ENCODE measurements at regions of chr14 and their contacts with region 1.

Region 1: DNA sequence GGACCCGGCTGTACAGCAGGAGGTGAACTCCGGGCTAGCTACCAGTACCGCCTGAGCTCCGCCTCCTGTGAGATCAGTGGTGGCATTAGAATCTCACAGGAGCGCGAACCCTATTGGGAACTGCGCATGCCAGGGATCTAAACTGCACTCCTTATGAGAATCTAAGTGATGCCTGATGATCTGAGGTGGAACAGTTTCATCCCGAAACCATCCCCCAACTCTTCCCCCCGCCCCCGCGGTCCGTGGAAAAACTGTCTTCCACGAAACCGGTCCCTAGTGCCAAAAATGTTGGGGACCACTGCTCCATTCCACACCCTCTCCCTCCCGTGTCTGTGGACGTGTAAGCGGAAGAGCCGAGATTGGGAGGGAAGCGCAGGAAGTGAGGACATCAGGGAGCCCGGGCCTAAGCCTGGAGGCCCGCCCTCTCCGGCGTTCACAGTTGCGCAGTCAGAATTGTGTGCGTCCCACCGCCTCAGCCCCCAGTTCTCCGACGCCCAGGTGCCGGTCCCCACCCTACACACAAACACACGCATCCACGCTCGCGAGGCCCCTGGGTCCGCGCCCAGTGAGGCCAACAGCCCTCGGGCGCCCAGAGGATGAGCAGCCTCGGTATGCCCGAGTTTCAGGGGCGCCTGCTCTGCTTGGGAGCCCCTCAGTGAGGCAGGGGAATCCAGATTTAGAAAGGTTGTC is 1.8 kb upstream of the RNASE4 start:
- DNase-seq: peak; percentile 93 to 94
- H3K4me3 ChIP-seq: peak overlapping the region; percentile 34 to 57 (median 56)
- H3K27ac ChIP-seq: peak overlapping the region; percentile 98 to 100 (median 100)
- H3K4me1 ChIP-seq: peaks cover 7 to 10% of the 10 kb centered on the region in 2 donors
- H3K27me3 ChIP-seq: no peaks in the 10 kb centered on the region
- CTCF ChIP-seq: peak in 1 of 6 experiments; percentile 23
- POLR2A ChIP-seq: peak; percentile 76 to 97

Region 2: GRCh38 chr14:20332788-20333493 is 349.6 kb before region 1 on chr14 and contains the start of gene CCNB1IP1:
- intact Hi-C with region 1: loop called (anchors 5 kb)
- DNase-seq: peak; percentile 64 to 67
- H3K4me3 ChIP-seq: peak within 1 kb of the TSS in 2 of 3 donors; percentile 37 to 49
- H3K27ac ChIP-seq: peak within 1 kb of the TSS; percentile 66 to 79 (median 77)
- H3K4me1 ChIP-seq: peaks cover 13 to 16% of the 10 kb centered on the region in 2 donors
- H3K27me3 ChIP-seq: no peaks in the 10 kb centered on the region
- CTCF ChIP-seq: no peak
- POLR2A ChIP-seq: peak in 1 of 2 donors; percentile 84
- total RNA-seq, gene CCNB1IP1: 57.2 to 150 (median 92.9) TPM

Region 3: DNA sequence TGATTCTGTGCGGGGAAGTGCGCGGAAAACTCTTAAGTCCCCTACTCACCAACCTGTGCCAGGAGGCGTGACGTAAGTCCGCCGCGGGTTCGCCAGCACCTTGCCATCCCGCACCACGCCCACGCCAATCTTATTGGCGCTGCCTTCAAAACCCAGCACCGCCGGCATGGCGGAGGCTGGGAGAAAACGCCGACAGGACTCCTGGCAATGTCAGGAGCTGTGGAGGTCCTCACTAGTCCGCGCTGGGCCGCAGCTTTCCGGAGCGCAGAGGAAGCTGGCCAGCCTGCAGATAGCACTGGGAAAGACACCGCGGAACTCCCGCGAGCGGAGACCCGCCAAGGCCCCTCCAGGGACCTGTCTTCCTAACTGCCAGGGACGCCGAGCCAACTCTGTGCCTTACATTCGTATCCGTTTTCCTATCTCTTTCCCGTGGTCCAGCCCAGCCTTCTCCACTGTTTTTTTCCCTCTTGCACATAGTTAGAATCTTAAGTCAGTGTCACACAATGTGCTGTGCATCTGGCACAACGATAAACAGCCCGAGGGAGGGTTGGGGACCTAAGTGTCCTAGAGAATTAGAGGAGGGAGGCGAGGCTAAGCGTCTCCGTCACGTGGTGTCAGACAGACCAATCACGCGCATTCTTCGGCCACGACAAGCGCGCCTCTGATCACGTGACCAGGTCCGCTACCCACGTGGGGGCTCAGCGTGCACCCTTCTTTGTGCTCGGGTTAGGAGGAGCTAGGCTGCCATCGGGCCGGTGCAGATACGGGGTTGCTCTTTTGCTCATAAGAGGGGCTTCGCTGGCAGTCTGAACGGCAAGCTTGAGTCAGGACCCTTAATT is 227.8 kb before region 1 on chr14 and contains the starts of genes APEX1 and OSGEP:
- intact Hi-C with region 1: loop called (anchors 10 kb)
- DNase-seq: peak; percentile 99
- H3K4me3 ChIP-seq: peak within 1 kb of the TSS; percentile 54 to 70 (median 59)
- H3K27ac ChIP-seq: peak within 1 kb of the TSS; percentile 81 to 94 (median 85)
- H3K4me1 ChIP-seq: peaks cover 17 to 23% of the 10 kb centered on the region in 2 donors
- H3K27me3 ChIP-seq: no peaks in the 10 kb centered on the region
- CTCF ChIP-seq: peak in 1 of 6 experiments; percentile 18
- POLR2A ChIP-seq: peak in 1 of 2 donors; percentile 84
- total RNA-seq, gene APEX1: 133 to 179 (median 142) TPM
- total RNA-seq, gene OSGEP: 56.7 to 88.8 (median 75.0) TPM

Region 4: GRCh38 chr14:20613094-20614037 is 69.2 kb before region 1 on chr14:
- intact Hi-C with region 1: loop called (anchors 5 kb)
- DNase-seq: peak; percentile 80 to 87
- H3K4me3 ChIP-seq: peak overlapping the region; percentile 9 to 29 (median 11)
- H3K27ac ChIP-seq: peak overlapping the region; percentile 30 to 79 (median 61)
- H3K4me1 ChIP-seq: no peaks in the 10 kb centered on the region
- H3K27me3 ChIP-seq: no peaks in the 10 kb centered on the region
- CTCF ChIP-seq: peak in 5 of 6 experiments; percentile 53 to 99 (median 90)
- POLR2A ChIP-seq: no peak

Region 5: DNA sequence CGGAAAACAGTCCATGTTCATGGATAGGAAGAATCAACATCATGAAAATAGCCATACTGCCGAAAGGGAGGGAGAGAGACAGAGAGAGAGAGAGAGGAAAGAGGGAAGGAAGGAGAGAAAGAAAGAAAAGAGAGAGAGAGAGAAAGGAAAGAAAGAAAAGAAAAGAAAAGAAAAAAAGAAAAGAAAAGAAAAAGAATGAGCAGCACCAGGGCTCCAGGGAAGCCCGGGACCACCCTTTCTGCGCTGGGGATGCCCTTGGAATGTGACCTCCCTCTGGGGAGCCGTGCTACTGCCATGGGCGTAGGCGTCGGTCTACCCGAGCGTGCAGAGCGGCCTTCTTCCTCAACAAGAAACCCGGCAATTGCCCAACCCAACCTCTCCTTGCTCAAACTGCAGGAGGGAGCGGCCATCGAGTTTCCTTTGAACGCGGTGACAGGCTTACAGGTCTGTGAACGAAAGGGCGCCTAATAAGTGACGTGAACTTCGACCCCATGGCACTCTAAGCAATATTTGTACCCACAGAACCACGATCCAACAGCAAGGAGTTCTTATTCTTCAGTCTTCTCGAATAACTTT is 58.0 kb before region 1 on chr14:
- intact Hi-C with region 1: loop called (anchors 5 kb)
- DNase-seq: peak; percentile 71 to 76
- H3K4me3 ChIP-seq: no peak overlapping the region
- H3K27ac ChIP-seq: no peak overlapping the region
- H3K4me1 ChIP-seq: peaks cover 0 to 4% of the 10 kb centered on the region in 2 donors
- H3K27me3 ChIP-seq: peaks cover 16% of the 10 kb centered on the region
- CTCF ChIP-seq: no peak
- POLR2A ChIP-seq: no peak

Region 6: GRCh38 chr14:20866963-20867362 is 184.4 kb after region 1 on chr14:
- intact Hi-C with region 1: no loop called
- DNase-seq: peak in 1 of 2 donors; percentile 4
- H3K4me3 ChIP-seq: no peak overlapping the region
- H3K27ac ChIP-seq: no peak overlapping the region
- H3K4me1 ChIP-seq: no peaks in the 10 kb centered on the region
- H3K27me3 ChIP-seq: no peaks in the 10 kb centered on the region
- CTCF ChIP-seq: peak in 1 of 6 experiments; percentile 14
- POLR2A ChIP-seq: no peak